ENCODE measurements at regions of chr3 and their contacts with region 1.

Region 1: DNA sequence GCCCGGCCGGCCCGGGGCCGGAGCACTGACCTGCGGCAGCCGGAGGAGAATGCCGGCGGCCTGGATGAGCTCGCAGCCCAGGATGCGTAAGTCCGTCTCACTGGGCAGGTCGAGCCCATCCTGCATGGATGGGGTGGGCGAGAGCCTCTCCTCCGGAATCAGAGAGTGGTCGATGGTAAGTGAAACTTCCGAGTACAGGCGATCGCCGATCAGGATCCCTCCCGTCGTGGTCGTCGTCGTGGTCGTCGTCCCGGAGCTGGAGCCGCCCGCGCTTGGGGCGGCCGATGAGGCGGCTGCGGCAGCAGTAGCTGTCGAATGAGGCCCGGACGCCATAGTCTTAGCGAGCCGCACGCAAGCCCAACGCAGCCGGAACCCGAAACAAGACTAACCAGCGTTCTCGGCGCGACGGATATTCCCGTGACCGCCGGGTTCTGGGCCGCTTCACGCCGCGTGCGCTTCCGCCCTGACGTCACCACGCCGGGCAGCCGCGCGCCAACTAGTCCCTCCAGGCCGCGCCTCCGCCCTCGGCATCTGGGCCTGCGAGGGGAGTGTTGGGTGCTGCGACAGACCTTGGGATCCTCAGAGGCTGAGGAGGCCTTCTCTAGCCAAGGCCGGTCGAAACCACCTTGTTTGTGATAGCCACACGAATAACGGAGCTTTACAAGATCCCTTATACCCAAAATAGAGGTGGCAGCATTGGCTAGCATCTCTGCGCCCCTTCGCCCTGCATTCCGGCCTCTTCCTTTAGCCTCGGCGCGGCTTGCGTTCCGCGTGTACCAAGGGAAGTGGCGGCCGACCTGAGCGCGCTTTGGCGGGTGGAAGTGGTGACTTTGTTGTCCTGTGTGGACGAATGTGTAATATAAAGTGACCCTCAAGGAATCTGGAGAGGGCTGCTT is at the start of gene CCNL1:
- DNase-seq: peak; percentile 98 to 99 (median 99)
- H3K4me3 ChIP-seq: peak within 1 kb of the TSS; percentile 61 to 99 (median 98)
- H3K27ac ChIP-seq: peak within 1 kb of the TSS; percentile 99 to 100
- H3K4me1 ChIP-seq: peaks cover 16 to 66% (median 38%) of the 10 kb centered on the region in 4 experiments
- H3K27me3 ChIP-seq: no peaks in the 10 kb centered on the region

Region 2: GRCh38 chr3:157148196-157148889 is 11.7 kb before region 1 on chr3:
- CTCF ChIA-PET with region 1: interaction called, 14 read pairs
- POLR2A ChIA-PET with region 1: interaction called, 11 read pairs
- DNase-seq: no peak
- H3K4me3 ChIP-seq: no peak overlapping the region
- H3K27ac ChIP-seq: no peak overlapping the region
- H3K4me1 ChIP-seq: no peaks in the 10 kb centered on the region
- H3K27me3 ChIP-seq: no peaks in the 10 kb centered on the region

Region 3: GRCh38 chr3:157174649-157175498 is 14.9 kb after region 1 on chr3:
- CTCF ChIA-PET with region 1: interaction called, 74 read pairs
- POLR2A ChIA-PET with region 1: interaction called, 129 read pairs
- DNase-seq: peak; percentile 100
- H3K4me3 ChIP-seq: peak overlapping the region; percentile 23 to 99 (median 90)
- H3K27ac ChIP-seq: peak overlapping the region; percentile 93 to 98
- H3K4me1 ChIP-seq: peaks cover 5 to 36% (median 14%) of the 10 kb centered on the region in 4 experiments
- H3K27me3 ChIP-seq: no peaks in the 10 kb centered on the region

Region 4: GRCh38 chr3:157290766-157291165 is 130.8 kb after region 1 on chr3:
- CTCF ChIA-PET with region 1: no interaction called
- POLR2A ChIA-PET with region 1: no interaction called
- DNase-seq: no peak
- H3K4me3 ChIP-seq: no peak overlapping the region
- H3K27ac ChIP-seq: no peak overlapping the region
- H3K4me1 ChIP-seq: peaks cover 0 to 7% (median 1%) of the 10 kb centered on the region in 4 experiments
- H3K27me3 ChIP-seq: no peaks in the 10 kb centered on the region

Measured in common myeloid progenitor, CD34-positive (primary cell).